Stomach (tissue), 19 donors: ENCODE measurements at regions of chr1 and their contacts with region 1.

Region 1: DNA sequence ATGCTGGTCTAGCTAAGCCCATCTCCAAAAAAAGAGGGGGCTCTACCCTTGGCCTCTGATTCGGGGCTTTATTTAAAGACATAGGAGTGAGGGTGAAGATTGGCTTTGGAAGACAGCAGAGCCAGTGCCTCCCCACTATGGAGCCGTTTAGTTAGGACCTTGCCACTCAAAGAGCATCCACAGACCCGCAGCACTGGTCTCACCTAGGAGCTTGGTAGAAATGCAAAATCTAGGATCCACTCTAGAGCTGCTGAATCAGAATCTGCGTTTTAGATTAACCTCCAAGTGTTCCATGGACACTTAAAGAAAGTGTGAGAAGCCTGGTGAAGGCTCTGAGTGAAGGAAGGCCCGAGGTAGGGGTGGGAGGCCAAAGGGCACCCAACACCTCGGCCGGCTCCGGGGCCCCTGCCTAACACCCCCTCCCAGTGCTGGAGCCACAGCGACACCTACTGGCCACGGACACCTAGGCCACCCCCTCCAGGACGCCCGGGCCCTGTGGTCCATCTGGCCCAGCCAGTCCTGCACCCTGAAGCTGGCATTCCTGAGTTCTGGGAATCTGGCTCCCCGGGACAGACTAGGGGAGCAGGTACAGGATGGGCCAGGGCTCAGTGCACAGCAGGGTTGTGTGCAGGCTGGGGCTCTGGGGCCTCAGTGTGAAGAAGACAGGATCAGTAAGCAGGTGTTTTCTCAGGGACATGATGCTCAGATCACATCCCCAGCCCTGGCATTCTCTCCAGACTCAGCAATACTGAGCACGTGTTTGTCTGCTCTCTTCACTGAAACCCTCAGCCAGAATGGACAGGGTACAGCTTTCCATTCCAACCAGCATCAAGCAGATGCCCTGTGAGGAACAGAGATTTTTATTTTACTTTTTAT is 79.2 kb downstream of the TMEM53 start:
- DNase-seq: peak; percentile 84 to 87
- H3K4me3 ChIP-seq: no peak overlapping the region
- H3K27ac ChIP-seq: no peak overlapping the region
- H3K4me1 ChIP-seq: peaks cover 0 to 6% (median 0%) of the 10 kb centered on the region in 4 donors
- H3K27me3 ChIP-seq: peaks cover 0 to 33% (median 16%) of the 10 kb centered on the region in 3 donors
- CTCF ChIP-seq: peak in 5 of 7 experiments; percentile 87 to 97 (median 90)
- EP300 ChIP-seq: no peak
- POLR2A ChIP-seq: no peak

Region 2: GRCh38 chr1:44227211-44227610 is 367.9 kb before region 1 on chr1:
- intact Hi-C with region 1: no loop called
- DNase-seq: no peak
- H3K4me3 ChIP-seq: no peak overlapping the region
- H3K27ac ChIP-seq: no peak overlapping the region
- H3K4me1 ChIP-seq: no peaks in the 10 kb centered on the region
- H3K27me3 ChIP-seq: no peaks in the 10 kb centered on the region
- CTCF ChIP-seq: no peak
- EP300 ChIP-seq: no peak
- POLR2A ChIP-seq: no peak

Region 3: DNA sequence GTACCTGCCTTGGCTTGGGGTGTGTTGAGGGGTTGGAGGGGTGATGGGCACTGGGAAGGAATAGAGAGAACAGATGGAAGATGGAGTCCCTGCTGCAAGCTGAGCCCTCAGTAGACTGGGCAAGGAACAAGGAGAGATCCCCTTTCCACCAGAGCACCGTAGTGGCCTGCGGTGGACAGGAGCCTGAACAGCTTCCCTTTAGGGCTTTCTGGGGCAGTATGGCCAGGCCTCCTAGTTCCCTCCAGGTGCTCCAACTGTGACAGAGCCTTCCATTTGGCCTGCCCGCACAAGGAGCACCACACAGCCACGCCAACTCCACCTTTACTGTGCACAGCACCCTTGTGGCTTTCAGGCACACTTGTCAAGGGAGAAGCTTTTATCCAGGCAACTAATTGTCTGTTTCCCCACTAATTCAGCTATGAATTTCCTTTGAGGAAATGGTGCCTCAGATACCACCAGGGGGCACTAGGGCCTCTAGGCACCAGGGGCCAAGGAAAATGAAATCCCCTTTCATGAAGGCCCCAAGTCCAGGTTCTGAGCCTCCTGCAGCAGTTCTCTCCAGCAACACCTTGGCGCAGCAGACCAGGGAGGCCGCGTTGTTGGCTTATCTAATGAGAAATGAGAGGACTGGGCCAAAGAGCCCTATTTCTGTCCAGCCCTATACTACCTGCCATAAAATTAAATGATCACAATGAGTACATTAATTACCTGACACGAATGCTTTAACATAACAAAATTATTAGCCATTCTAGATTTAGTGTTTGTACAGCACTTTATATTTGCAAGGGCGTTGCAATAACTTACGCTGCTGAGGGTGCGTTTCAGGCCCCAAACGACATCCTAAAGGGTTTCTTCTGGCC is 217.0 kb before region 1 on chr1:
- intact Hi-C with region 1: loop called (anchors 5 kb)
- DNase-seq: peak; percentile 57 to 78
- H3K4me3 ChIP-seq: no peak overlapping the region
- H3K27ac ChIP-seq: no peak overlapping the region
- H3K4me1 ChIP-seq: no peaks in the 10 kb centered on the region
- H3K27me3 ChIP-seq: no peaks in the 10 kb centered on the region
- CTCF ChIP-seq: peak in 5 of 7 experiments; percentile 40 to 65 (median 45)
- EP300 ChIP-seq: no peak
- POLR2A ChIP-seq: no peak

Region 4: GRCh38 chr1:44523593-44524591 is 71.2 kb before region 1 on chr1:
- intact Hi-C with region 1: no loop called
- DNase-seq: peak in 1 of 2 donors; percentile 59
- H3K4me3 ChIP-seq: no peak overlapping the region
- H3K27ac ChIP-seq: no peak overlapping the region
- H3K4me1 ChIP-seq: peaks cover 0 to 11% (median 0%) of the 10 kb centered on the region in 4 donors
- H3K27me3 ChIP-seq: peaks cover 0 to 44% (median 14%) of the 10 kb centered on the region in 3 donors
- CTCF ChIP-seq: no peak
- EP300 ChIP-seq: no peak
- POLR2A ChIP-seq: no peak